Naive thymus-derived CD4-positive, alpha-beta T cell (primary cell): ENCODE measurements at regions of chr5 and their contacts with region 1.

Region 1: DNA sequence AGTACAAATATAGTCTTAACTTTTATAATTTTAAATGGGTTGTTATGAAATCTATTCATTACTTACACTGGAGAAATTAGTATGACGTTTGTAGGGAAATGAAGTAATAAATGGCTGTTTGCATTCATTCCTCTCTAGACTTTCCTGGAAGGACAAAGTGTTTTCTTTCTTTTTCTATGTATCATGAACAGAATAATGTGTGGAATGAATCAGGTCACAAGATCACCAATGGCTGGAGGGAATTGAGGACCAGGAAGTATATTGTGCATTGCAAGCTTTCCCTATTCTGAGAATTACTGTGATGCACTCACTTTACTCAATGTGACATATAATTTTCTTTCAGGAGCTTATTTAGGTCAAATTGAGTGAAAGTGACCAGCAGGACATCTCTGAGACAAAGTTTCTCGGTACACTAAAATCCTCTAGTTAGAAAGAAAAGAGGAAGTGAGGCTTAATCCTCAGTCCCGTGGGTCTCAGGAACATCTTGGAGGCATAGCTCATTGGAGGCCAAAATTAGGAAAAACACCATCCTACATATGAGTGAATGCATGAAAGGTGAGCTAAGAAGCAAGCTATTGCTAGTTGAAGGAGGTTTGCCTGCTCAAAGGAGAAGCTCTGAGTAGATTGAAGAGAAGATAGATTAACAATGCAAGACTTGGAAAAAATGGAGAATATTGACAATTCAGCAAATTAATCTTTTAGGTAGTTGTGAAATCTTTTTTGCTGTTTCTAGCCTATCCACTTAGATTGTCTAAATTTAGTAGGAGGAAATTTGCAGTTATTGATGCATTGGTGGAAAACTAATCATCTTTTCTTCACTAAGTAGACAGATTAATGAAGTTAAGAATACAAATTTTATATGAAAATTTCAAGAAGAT is 28.0 kb downstream of the ERAP2 start:
- DNase-seq: no peak
- ATAC-seq: no peak
- H3K4me3 ChIP-seq: no peak overlapping the region
- H3K4me3 Mint-ChIP-seq: no peak overlapping the region
- H3K27ac ChIP-seq: no peak overlapping the region
- H3K27ac Mint-ChIP-seq: peak overlapping the region in 8 of 9 donors; percentile 23 to 80 (median 58)
- H3K4me1 ChIP-seq: no peaks in the 10 kb centered on the region
- H3K4me1 Mint-ChIP-seq: peaks cover 14 to 36% (median 31%) of the 10 kb centered on the region in 7 donors
- H3K27me3 ChIP-seq: no peaks in the 10 kb centered on the region
- H3K27me3 Mint-ChIP-seq: no peaks in the 10 kb centered on the region

Region 2: GRCh38 chr5:96919754-96920197 is 15.5 kb after region 1 on chr5:
- CTCF ChIA-PET with region 1: interaction called, 5 read pairs
- POLR2A ChIA-PET with region 1: interaction called, 6 read pairs
- intact Hi-C with region 1: loop called in 1 of 2 experiments (anchors 1 kb)
- DNase-seq: no peak
- ATAC-seq: no peak
- H3K4me3 ChIP-seq: no peak overlapping the region
- H3K4me3 Mint-ChIP-seq: no peak overlapping the region
- H3K27ac ChIP-seq: no peak overlapping the region
- H3K27ac Mint-ChIP-seq: peak overlapping the region in 5 of 9 donors; percentile 54 to 87 (median 77)
- H3K4me1 ChIP-seq: peaks cover 0 to 16% of the 10 kb centered on the region in 2 donors
- H3K4me1 Mint-ChIP-seq: peaks cover 14 to 56% (median 49%) of the 10 kb centered on the region in 7 donors
- H3K27me3 ChIP-seq: no peaks in the 10 kb centered on the region
- H3K27me3 Mint-ChIP-seq: no peaks in the 10 kb centered on the region